Mammary epithelial cell (primary cell): ENCODE measurements at regions of chr13 and their contacts with region 1.

Region 1: GRCh38 chr13:72368031-72368430 is 359.4 kb downstream of the MZT1 start:
- DNase-seq: peak; percentile 25
- H3K4me3 ChIP-seq: no peak overlapping the region
- H3K27ac ChIP-seq: no peak overlapping the region
- H3K4me1 ChIP-seq: no peaks in the 10 kb centered on the region
- H3K27me3 ChIP-seq: no peaks in the 10 kb centered on the region
- CTCF ChIP-seq: no peak

Region 2: GRCh38 chr13:72415817-72416216 is 47.8 kb after region 1 on chr13:
- CTCF ChIA-PET with region 1: no interaction called
- dilution Hi-C with region 1: no loop called
- in situ Hi-C with region 1: no loop called
- intact Hi-C with region 1: no loop called
- DNase-seq: no peak
- H3K4me3 ChIP-seq: no peak overlapping the region
- H3K27ac ChIP-seq: no peak overlapping the region
- H3K4me1 ChIP-seq: no peaks in the 10 kb centered on the region
- H3K27me3 ChIP-seq: no peaks in the 10 kb centered on the region
- CTCF ChIP-seq: no peak

Region 3: GRCh38 chr13:72444999-72445398 is 77.0 kb after region 1 on chr13:
- CTCF ChIA-PET with region 1: no interaction called
- dilution Hi-C with region 1: no loop called
- in situ Hi-C with region 1: no loop called
- intact Hi-C with region 1: loop called (anchors 10 kb)
- DNase-seq: no peak
- H3K4me3 ChIP-seq: no peak overlapping the region
- H3K27ac ChIP-seq: no peak overlapping the region
- H3K4me1 ChIP-seq: no peaks in the 10 kb centered on the region
- H3K27me3 ChIP-seq: no peaks in the 10 kb centered on the region
- CTCF ChIP-seq: no peak

Region 4: DNA sequence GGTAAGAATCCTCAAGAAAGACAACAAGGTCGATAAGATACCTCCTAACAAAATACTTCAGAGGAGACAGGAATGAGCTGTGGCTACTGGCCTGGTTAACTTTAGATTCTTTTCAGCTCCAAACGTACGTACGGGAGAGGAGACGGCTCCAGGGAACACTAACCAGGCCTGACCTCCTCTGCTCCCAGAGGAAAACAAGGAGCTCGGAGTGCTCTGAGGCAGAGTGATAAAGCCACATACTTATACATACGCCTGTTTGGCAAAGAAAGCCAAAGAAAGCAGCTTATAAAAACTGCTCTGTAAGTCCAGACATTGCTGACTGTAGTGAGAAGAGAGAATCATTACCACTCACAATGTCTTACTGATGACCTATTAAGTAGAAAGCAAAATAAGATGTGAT is 95.5 kb after region 1 on chr13:
- CTCF ChIA-PET with region 1: no interaction called
- dilution Hi-C with region 1: no loop called
- in situ Hi-C with region 1: no loop called
- intact Hi-C with region 1: no loop called
- DNase-seq: no peak
- H3K4me3 ChIP-seq: no peak overlapping the region
- H3K27ac ChIP-seq: no peak overlapping the region
- H3K4me1 ChIP-seq: no peaks in the 10 kb centered on the region
- H3K27me3 ChIP-seq: no peaks in the 10 kb centered on the region
- CTCF ChIP-seq: no peak